Dorsolateral prefrontal cortex (tissue), 120 donors: ENCODE measurements at regions of chr12 and their contacts with region 1.

Region 1: DNA sequence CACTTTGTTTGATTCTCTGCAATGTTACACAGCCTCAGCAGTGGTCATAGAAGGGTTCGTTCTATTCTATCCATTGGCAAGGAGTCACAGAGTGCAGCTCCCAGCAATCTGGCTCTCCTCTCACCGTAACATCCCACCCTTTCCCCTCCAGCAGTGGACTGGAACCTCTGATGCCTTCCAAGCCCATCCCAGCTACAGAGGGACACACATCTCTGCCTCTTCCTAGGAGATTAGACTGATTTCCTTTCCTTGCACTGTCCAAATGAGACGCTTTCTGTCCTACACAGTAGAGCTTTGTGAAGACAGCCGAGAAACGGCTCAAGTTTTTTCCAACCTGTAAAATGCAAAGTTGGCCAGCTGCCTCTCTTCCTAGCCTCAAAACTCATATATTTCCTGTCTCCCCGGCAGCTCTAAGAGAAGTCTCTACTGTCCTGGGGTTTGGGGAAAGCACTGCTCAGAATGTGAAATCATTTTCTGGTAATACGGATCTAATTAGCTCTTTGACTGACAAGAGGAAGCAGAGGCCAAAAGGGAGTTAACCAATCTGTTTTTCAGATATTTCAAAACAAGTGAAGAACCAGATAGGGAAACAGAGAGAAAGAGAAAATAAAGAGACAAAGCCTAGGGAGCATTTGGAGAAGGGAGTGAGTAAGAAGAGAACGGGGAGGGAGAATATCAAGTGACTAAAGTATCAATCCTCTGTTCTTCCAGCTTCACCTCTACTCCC is 516 bp downstream of the NINJ2 start:
- DNase-seq: no peak
- H3K4me3 ChIP-seq: peak overlapping the region; percentile 31 to 76 (median 56)
- H3K27ac ChIP-seq: peak overlapping the region; percentile 71 to 97 (median 88)
- H3K27me3 ChIP-seq: no peaks in the 10 kb centered on the region
- CTCF ChIP-seq: no peak

Region 2: GRCh38 chr12:701896-702539 is 39.3 kb after region 1 on chr12:
- intact Hi-C with region 1: loop called (anchors 1 to 5 kb)
- DNase-seq: peak in 9 of 10 donors; percentile 47 to 88 (median 73)
- H3K4me3 ChIP-seq: peak overlapping the region in 1 of 59 donors; percentile 3
- H3K27ac ChIP-seq: peak overlapping the region; percentile 80 to 100 (median 97)
- H3K27me3 ChIP-seq: no peaks in the 10 kb centered on the region
- CTCF ChIP-seq: peak in 3 of 56 donors; percentile 12 to 22 (median 17)

Region 3: DNA sequence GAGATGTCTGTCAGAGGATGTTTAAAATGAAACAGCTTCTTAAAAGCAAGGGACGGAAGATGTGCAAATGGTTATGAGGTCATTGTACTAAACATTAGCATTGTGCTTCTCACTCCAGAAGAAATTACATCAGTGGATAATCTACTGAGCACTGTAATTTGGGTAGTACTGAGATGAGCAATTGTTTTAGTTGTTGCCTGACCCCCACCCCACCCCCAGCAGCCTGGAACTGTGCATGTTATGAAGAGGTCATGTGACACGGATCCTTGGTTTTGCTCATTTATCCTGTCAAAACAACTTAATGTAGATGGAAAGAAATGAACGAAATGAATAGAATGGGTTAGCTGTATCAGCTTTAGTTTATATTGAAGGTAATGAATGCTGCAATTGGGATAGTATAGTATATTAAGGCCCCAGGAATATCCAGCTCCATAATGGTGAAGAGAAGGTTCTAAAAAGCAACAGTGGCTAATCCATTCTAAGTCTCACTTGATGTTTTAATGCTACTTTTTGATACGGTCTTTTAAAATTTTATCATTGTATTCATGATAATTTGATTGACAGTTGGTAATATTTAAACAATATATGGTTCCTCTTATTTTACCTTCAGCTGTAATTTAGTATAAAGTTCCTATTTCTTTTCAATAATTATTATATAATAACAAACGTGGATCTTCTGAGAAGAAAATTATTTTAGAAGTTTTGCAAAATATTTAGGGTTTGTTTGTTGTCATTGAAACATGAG is 148.1 kb after region 1 on chr12:
- intact Hi-C with region 1: no loop called
- DNase-seq: peak in 1 of 10 donors; percentile 21
- H3K4me3 ChIP-seq: peak overlapping the region in 7 of 59 donors; percentile 4 to 35 (median 16)
- H3K27ac ChIP-seq: peak overlapping the region in 41 of 59 donors; percentile 0 to 74 (median 40)
- H3K27me3 ChIP-seq: no peaks in the 10 kb centered on the region
- CTCF ChIP-seq: no peak

Region 4: DNA sequence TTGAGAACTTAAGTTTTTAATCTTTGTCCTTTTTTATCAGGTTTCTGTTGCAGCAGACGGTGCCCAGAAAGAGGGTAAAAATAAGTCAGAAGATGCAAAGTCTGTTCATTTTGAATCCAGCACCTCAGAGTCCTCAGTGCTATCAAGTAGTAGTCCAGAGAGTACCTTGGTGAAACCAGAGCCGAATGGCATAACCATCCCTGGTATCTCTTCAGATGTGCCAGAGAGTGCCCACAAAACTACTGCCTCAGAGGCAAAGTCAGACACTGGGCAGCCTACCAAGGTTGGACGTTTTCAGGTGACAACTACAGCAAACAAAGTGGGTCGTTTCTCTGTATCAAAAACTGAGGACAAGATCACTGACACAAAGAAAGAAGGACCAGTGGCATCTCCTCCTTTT is 233.3 kb after region 1 on chr12:
- intact Hi-C with region 1: no loop called
- DNase-seq: no peak
- H3K4me3 ChIP-seq: no peak overlapping the region
- H3K27ac ChIP-seq: peak overlapping the region in 1 of 59 donors; percentile 23
- H3K27me3 ChIP-seq: no peaks in the 10 kb centered on the region
- CTCF ChIP-seq: no peak